ENCODE measurements at regions of chr3 and their contacts with region 1.

Region 1: DNA sequence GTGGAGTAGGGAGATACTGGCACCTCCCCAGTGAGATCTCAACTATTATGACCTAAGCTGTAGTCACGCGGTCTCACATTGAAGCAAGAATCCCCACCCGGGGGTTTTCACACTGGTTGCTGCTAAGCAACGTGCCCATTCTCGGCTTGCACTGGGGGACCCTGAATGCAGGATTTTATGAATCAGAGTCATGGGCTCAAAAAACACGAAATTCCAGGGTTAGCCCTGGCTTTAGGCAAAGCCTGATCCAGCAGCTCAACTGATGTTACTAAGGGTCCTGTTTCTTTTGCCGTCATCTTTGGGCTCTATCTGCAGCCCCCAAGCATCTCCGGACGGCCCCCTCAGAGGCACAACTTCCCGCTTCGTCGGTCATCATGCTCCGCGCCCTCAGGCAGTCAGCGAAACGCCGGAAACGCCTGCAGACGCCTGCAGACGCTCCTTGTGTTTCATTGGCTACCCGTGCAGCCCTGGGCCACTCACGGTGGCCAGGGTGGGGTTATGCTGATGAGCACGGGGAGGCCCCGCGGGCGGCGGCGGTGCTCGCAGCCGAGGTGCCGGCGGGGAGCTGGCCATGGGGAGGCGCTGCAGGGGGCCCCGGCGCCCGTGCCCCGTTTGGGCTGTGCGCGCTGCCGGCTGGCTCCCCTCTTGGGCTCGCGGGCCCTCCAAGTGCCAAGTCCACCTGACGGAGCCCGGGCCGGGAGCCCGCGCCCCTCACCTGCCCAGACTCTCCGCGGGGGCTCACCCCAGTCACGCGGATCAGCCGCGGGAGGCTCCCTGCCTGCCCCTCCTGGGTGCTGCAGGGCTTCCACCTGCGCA is 25.8 kb downstream of the EFCC1 start:
- DNase-seq: peak; percentile 93 to 95
- H3K4me3 ChIP-seq: peak overlapping the region; percentile 44
- H3K4me3 Mint-ChIP-seq: peak overlapping the region; percentile 77
- H3K27ac Mint-ChIP-seq: peak overlapping the region; percentile 73
- H3K4me1 ChIP-seq: peaks cover 6% of the 10 kb centered on the region; the same call in 1 of the 2 replicates
- H3K4me1 Mint-ChIP-seq: peaks cover 7% of the 10 kb centered on the region
- H3K27me3 ChIP-seq: no peaks in the 10 kb centered on the region
- H3K27me3 Mint-ChIP-seq: peaks cover 3% of the 10 kb centered on the region
- CTCF ChIP-seq: peak; percentile 48 to 67

Region 2: DNA sequence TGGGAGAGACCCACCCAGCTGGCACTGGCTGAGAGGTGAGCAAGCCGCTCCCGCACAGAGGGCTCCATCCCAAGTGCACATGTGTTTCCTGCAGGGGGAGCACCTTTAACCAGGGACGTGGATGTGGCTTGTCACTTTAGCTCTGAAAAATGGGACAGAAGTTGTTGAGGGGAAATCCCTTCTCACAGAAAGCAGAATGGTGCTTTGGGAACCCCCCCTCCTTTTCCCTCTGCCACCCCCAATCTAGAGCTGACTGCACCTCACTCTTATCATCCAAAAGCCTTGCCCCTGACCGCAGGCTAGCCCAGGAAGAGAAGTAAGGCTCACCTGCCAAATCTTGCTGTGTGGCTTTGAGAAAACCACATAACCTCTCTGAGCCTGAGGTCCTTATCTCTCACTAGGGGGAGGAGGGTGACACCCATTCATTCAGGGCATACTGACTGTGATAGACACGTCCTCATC is 454.3 kb before region 1 on chr3:
- CTCF ChIA-PET with region 1: no interaction called
- POLR2A ChIA-PET with region 1: no interaction called
- intact Hi-C with region 1: no loop called
- DNase-seq: peak; percentile 43 to 44
- H3K4me3 ChIP-seq: no peak overlapping the region
- H3K4me3 Mint-ChIP-seq: no peak overlapping the region
- H3K27ac Mint-ChIP-seq: no peak overlapping the region
- H3K4me1 ChIP-seq: no peaks in the 10 kb centered on the region
- H3K4me1 Mint-ChIP-seq: no peaks in the 10 kb centered on the region
- H3K27me3 ChIP-seq: no peaks in the 10 kb centered on the region
- H3K27me3 Mint-ChIP-seq: no peaks in the 10 kb centered on the region
- CTCF ChIP-seq: peak; percentile 52 to 61

Region 3: DNA sequence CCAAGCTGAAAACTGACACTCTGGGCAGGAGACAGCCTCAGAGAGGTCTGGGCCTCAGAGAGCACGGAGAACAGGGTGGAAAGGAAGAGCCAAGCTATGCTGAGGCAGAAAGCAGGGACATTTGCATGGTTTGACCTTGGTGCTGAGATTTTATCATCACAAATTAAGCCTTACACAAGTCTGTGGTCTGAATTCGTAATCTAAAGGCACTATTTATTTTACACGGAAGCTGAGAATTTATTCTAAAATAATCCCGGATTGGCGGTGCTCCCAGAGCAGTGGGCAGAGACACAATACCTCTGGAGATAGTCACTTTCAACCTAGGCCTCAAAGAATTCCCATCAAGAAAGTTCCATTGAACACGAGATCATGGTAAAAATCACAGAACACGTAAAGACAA is 80.5 kb before region 1 on chr3:
- CTCF ChIA-PET with region 1: no interaction called
- POLR2A ChIA-PET with region 1: interaction called, 13 read pairs
- intact Hi-C with region 1: no loop called
- DNase-seq: no peak
- H3K4me3 ChIP-seq: no peak overlapping the region
- H3K4me3 Mint-ChIP-seq: no peak overlapping the region
- H3K27ac Mint-ChIP-seq: no peak overlapping the region
- H3K4me1 ChIP-seq: no peaks in the 10 kb centered on the region
- H3K4me1 Mint-ChIP-seq: no peaks in the 10 kb centered on the region
- H3K27me3 ChIP-seq: no peaks in the 10 kb centered on the region
- H3K27me3 Mint-ChIP-seq: no peaks in the 10 kb centered on the region
- CTCF ChIP-seq: no peak

Region 4: DNA sequence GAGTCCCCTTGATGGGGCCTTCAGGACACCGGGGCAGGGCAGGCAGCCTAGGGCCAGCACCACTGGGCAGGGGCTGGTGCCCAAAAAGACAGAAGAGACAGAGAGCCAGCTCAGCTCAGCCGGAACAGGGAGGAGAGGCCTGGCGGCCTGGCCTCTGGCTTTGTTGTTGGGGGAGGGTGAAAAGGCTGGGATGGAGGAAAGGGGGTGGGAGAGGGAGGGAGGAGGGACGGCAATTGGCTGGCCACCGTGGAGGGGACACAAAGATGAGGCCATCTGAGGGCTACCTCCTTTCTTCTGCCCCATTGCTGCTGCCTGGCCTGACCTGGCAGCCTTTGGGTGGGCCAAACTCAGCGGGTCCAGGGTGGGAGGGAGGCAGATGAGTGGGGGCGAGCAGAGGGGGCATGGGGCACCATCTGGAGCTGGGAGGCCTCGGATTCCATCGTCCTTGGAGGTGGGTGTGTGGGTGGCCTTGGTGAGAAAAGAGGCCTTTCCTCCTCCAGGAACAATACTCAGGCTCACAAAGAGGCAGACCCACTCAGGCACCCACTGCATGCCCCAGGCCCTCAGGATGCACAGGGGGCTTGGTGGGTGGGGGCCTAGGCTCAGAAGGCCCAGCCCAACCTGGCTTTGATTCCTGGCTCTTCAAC is 16.5 kb before region 1 on chr3:
- CTCF ChIA-PET with region 1: interaction called, 3 read pairs
- POLR2A ChIA-PET with region 1: no interaction called
- intact Hi-C with region 1: loop called (anchors 2 kb)
- DNase-seq: no peak
- H3K4me3 ChIP-seq: no peak overlapping the region
- H3K4me3 Mint-ChIP-seq: no peak overlapping the region
- H3K27ac Mint-ChIP-seq: no peak overlapping the region
- H3K4me1 ChIP-seq: no peaks in the 10 kb centered on the region
- H3K4me1 Mint-ChIP-seq: peaks cover 8% of the 10 kb centered on the region
- H3K27me3 ChIP-seq: no peaks in the 10 kb centered on the region
- H3K27me3 Mint-ChIP-seq: no peaks in the 10 kb centered on the region
- CTCF ChIP-seq: no peak

Region 5: DNA sequence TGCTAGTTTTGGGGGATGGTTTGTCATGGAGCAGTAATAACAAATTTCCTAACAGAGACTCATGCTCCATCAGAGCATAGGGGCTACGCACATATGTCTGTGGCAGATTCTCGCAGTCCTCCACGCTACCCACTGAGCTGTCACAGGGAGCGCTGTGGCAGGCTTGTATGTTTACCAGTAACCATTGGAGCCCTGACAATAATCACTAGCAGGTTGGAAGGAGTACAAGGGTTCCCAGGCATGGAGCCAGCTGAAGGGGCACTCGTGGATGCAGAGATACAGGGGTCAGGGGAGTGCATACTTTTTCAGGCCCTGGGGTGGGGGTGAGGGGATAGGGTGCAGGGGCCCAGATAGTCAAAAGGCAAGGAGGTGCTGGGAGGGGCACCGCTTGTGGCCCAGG is 25.7 kb after region 1 on chr3:
- CTCF ChIA-PET with region 1: interaction called, 7 read pairs
- POLR2A ChIA-PET with region 1: no interaction called
- intact Hi-C with region 1: loop called (anchors 1 kb)
- DNase-seq: no peak
- H3K4me3 ChIP-seq: no peak overlapping the region
- H3K4me3 Mint-ChIP-seq: peak overlapping the region; percentile 40
- H3K27ac Mint-ChIP-seq: peak overlapping the region; percentile 16
- H3K4me1 ChIP-seq: peaks cover 35% of the 10 kb centered on the region
- H3K4me1 Mint-ChIP-seq: peaks cover 16% of the 10 kb centered on the region
- H3K27me3 ChIP-seq: no peaks in the 10 kb centered on the region
- H3K27me3 Mint-ChIP-seq: no peaks in the 10 kb centered on the region
- CTCF ChIP-seq: no peak

Measured in Caco-2 (cell line).